Uterus (tissue), 4 donors: ENCODE measurements at regions of chr17 and their contacts with region 1.

Region 1: DNA sequence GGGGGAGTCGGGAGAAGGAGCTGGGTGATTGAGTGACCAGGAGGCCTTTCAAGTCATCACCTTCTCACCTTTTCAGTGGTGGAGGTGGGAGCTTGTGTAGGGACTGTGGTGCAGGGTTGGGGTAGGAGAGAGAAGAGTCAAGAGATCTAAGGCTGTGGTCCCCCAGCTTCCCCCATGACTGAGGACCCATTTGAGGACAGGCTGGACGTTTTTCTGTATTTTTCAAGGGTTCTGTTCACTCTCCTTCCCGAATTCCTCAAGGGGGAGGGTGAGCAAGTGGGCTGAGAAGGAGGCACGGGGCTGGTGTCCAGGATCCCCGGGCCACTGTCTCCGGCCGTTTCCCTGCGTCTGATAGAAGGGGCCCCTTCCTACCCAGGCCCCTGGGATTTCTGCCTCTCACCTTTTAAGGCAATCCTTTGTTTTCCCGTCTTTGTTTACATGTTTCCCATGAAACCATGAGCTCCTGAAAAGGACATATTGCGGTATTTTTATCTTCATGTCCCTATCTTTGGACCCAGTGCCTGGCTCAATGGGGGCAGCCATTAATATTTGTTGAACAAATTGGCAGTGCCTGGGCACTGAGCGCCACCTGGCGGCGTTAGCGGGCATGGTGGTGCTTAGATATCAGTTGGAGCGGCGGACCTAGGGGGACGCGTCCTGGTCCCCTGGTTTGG is 9.2 kb upstream of the CD300A start:
- DNase-seq: peak; percentile 78 to 80
- H3K4me3 ChIP-seq: no peak overlapping the region
- H3K27ac ChIP-seq: no peak overlapping the region
- H3K4me1 ChIP-seq: peaks cover 0 to 10% of the 10 kb centered on the region in 2 donors
- H3K27me3 ChIP-seq: no peaks in the 10 kb centered on the region
- CTCF ChIP-seq: peak; percentile 96 to 99 (median 98)
- POLR2A ChIP-seq: peak in 1 of 2 donors; percentile 17

Region 2: DNA sequence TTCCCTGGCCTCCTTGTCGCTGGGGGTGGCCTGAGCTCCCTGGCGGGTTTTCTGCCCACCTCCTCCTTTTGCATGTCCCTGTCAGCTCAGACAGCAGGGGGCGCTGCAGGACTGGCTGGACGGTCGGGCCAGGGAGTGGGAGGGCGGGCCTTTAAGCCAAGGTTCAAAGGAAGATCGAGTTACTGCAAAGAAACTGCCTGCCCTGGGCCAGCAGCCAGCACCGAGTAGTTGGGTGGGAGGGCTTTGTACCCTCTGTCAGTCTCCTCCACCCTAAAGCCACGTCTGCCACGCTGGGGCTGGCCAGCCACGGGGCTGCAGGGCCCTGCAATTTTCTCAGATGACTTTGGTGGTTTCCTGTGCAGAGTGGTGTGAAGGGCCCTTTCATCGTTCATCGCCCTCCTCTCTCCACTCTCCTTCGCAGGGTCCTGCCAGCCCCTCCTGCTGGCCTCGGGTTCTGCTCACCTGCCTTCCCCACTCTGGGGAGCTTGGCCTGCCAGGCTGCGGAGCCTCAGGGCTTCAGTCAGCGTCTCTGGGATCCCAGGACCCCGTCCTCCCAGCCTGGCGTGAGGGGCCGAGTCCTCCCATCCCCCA is 77.7 kb before region 1 on chr17:
- intact Hi-C with region 1: loop called (anchors 1 kb)
- DNase-seq: peak; percentile 89 to 90
- H3K4me3 ChIP-seq: no peak overlapping the region
- H3K27ac ChIP-seq: peak overlapping the region in 1 of 2 donors; percentile 49
- H3K4me1 ChIP-seq: peaks cover 0 to 5% of the 10 kb centered on the region in 2 donors
- H3K27me3 ChIP-seq: no peaks in the 10 kb centered on the region
- CTCF ChIP-seq: peak; percentile 95 to 98 (median 96)
- POLR2A ChIP-seq: peak in 1 of 2 donors; percentile 16

Region 3: DNA sequence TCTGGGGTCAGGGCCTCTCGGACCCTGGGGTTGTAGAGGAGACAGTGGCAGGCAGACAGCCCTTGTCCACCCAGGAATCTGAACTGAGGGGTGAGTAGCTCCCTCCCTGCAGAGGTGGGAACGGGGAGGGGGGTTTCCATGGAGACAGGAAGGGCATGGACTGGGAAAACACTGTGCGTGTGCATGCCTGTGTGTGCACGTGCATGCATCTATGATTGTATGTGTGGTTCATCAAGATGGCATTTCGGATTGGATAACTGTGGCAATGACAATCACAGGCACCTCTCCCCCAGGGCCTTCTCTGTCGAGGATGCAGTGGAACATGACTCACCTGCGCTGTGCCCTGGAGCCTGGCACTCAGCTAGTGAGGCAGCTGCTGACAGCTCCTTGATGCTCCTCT is 94.8 kb after region 1 on chr17:
- intact Hi-C with region 1: no loop called
- DNase-seq: no peak
- H3K4me3 ChIP-seq: no peak overlapping the region
- H3K27ac ChIP-seq: no peak overlapping the region
- H3K4me1 ChIP-seq: no peaks in the 10 kb centered on the region
- H3K27me3 ChIP-seq: no peaks in the 10 kb centered on the region
- CTCF ChIP-seq: no peak
- POLR2A ChIP-seq: no peak